T-cell (primary cell): ENCODE measurements at regions of chr2 and their contacts with region 1.

Region 1: GRCh38 chr2:143162123-143162837 is 33.1 kb downstream of the ARHGAP15 start:
- DNase-seq: peak in 34 of 35 experiments; percentile 37 to 83 (median 61)
- ATAC-seq: peak; percentile 90 to 99 (median 94)
- H3K4me3 ChIP-seq: no peak overlapping the region
- H3K4me3 Mint-ChIP-seq: no peak overlapping the region
- H3K27ac ChIP-seq: peak overlapping the region; percentile 3
- H3K27ac Mint-ChIP-seq: peak overlapping the region; percentile 82 to 90
- H3K4me1 ChIP-seq: peaks cover 12 to 28% of the 10 kb centered on the region in 2 experiments
- H3K4me1 Mint-ChIP-seq: peaks cover 89 to 95% (median 90%) of the 10 kb centered on the region in 3 donors
- H3K27me3 ChIP-seq: no peaks in the 10 kb centered on the region
- H3K27me3 Mint-ChIP-seq: no peaks in the 10 kb centered on the region

Region 2: GRCh38 chr2:143128681-143129580 is 33.3 kb before region 1 on chr2 and contains the start of gene ARHGAP15:
- CTCF ChIA-PET with region 1: interaction called, 7 to 18 read pairs
- POLR2A ChIA-PET with region 1: interaction called, 3 read pairs
- DNase-seq: peak; percentile 42 to 88 (median 76)
- ATAC-seq: peak; percentile 88 to 91 (median 90)
- H3K4me3 ChIP-seq: peak within 1 kb of the TSS; percentile 49 to 58
- H3K4me3 Mint-ChIP-seq: peak within 1 kb of the TSS; percentile 79 to 82 (median 80)
- H3K27ac ChIP-seq: peak within 1 kb of the TSS; percentile 89
- H3K27ac Mint-ChIP-seq: peak within 1 kb of the TSS; percentile 90 to 100
- H3K4me1 ChIP-seq: peaks cover 43 to 71% of the 10 kb centered on the region in 2 experiments
- H3K4me1 Mint-ChIP-seq: peaks cover 39 to 54% (median 49%) of the 10 kb centered on the region in 3 donors
- H3K27me3 ChIP-seq: no peaks in the 10 kb centered on the region
- H3K27me3 Mint-ChIP-seq: no peaks in the 10 kb centered on the region
- total RNA-seq, gene ARHGAP15: 154 to 271 (median 188) TPM

Region 3: GRCh38 chr2:143177096-143177786 is 15.0 kb after region 1 on chr2:
- CTCF ChIA-PET with region 1: interaction called, 6 to 14 read pairs
- POLR2A ChIA-PET with region 1: interaction called, 3 to 4 read pairs
- DNase-seq: peak in 1 of 35 experiments; percentile 47
- ATAC-seq: peak; percentile 57 to 70 (median 64)
- H3K4me3 ChIP-seq: peak overlapping the region in 1 of 2 donors; percentile 27
- H3K4me3 Mint-ChIP-seq: peak overlapping the region; percentile 72 to 82 (median 76)
- H3K27ac ChIP-seq: peak overlapping the region; percentile 88
- H3K27ac Mint-ChIP-seq: peak overlapping the region; percentile 95 to 99
- H3K4me1 ChIP-seq: peaks cover 15 to 23% of the 10 kb centered on the region in 2 experiments
- H3K4me1 Mint-ChIP-seq: peaks cover 53 to 71% (median 66%) of the 10 kb centered on the region in 3 donors
- H3K27me3 ChIP-seq: no peaks in the 10 kb centered on the region
- H3K27me3 Mint-ChIP-seq: no peaks in the 10 kb centered on the region

Region 4: DNA sequence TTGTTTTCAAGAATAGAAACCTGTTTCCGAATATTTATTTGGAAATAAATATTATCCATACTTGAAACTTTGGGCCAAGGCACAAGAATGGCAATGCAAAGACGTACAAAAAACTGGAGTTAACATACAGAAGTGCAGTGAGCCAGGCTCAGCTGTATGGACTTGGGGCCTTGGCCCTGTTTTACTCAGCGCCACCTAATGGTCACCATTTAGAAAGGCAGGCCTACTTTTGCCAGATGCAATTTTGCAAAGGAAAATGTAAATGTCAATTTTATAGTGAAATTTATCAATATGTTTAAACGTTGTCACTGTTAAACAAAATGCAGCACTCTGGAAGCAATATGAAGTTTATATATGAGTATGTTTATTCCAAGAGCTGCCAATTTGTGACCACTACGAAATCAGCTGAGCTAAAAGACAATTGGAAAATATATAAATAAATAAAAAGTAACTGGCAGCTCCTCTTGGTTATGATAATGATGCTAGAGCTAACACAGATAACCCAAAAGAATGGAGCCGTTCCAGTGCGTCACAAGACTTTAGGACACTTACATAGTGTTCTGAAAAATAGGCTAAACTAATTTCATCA is 121.9 kb after region 1 on chr2:
- CTCF ChIA-PET with region 1: interaction called, 3 to 26 read pairs
- POLR2A ChIA-PET with region 1: interaction called in 1 of 2 experiments, 4 read pairs
- DNase-seq: peak in 24 of 35 experiments; percentile 3 to 71 (median 12)
- ATAC-seq: peak; percentile 66 to 75 (median 70)
- H3K4me3 ChIP-seq: no peak overlapping the region
- H3K4me3 Mint-ChIP-seq: no peak overlapping the region
- H3K27ac ChIP-seq: no peak overlapping the region
- H3K27ac Mint-ChIP-seq: peak overlapping the region in 1 of 2 donors; percentile 0
- H3K4me1 ChIP-seq: no peaks in the 10 kb centered on the region
- H3K4me1 Mint-ChIP-seq: peaks cover 51 to 69% (median 57%) of the 10 kb centered on the region in 3 donors
- H3K27me3 ChIP-seq: no peaks in the 10 kb centered on the region
- H3K27me3 Mint-ChIP-seq: no peaks in the 10 kb centered on the region